PC-9 (cell line): ENCODE measurements at regions of chr14 and their contacts with region 1.

Region 1: GRCh38 chr14:95561001-95561412 is 26.2 kb downstream of the GLRX5 start:
- DNase-seq: peak; percentile 67 to 68
- H3K4me3 ChIP-seq: no peak overlapping the region
- H3K27ac ChIP-seq: no peak overlapping the region
- H3K4me1 ChIP-seq: no peaks in the 10 kb centered on the region
- H3K27me3 ChIP-seq: no peaks in the 10 kb centered on the region
- CTCF ChIP-seq: peak; percentile 92

Region 2: GRCh38 chr14:95774265-95775160 is 213.5 kb after region 1 on chr14:
- CTCF ChIA-PET with region 1: no interaction called
- POLR2A ChIA-PET with region 1: no interaction called
- intact Hi-C with region 1: loop called (anchors 1 kb)
- DNase-seq: peak in 1 of 2 experiments; percentile 1
- H3K4me3 ChIP-seq: no peak overlapping the region
- H3K27ac ChIP-seq: no peak overlapping the region
- H3K4me1 ChIP-seq: no peaks in the 10 kb centered on the region
- H3K27me3 ChIP-seq: peaks cover 16% of the 10 kb centered on the region; the same call in 1 of the 2 replicates
- CTCF ChIP-seq: peak; percentile 83

Region 3: DNA sequence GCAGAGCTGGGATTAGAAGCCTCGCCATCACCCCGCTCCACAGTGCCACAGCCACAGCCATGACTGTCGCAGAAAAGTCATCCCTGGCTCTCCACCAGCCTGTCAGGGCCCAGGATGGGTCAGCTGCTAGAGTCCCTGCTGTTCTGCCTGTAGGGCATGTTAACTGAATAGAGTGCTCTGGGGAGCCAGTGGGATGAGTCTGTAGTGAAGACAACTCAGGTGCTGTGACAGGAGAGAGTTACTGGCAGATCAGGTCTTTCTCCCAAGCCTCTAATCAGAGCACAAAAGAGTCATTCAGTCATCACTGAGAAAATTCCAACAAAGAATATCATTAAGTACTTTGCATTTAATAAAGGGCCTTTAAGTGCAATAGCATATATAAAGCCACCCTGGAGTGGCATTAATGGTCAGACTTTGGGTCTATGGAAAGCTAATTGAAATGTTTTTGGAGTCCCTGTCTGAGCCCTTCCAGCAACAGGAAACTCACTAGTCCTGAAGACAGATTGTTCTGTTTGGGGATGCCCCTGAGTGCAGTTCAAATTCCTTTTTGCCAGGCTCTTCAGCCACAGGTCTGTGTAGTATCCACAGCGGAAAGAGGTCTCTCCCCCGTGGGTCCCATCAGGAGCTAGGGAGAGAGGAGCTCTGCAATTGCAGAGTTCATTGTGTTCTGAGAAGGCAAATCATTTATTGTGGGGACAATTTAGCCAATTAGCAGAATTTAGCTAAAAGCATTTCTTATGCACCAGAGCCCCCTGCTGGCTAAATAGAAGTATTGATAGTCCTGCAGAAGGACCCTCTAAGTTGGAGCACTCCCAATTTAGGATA is 433.0 kb after region 1 on chr14:
- CTCF ChIA-PET with region 1: no interaction called
- POLR2A ChIA-PET with region 1: no interaction called
- intact Hi-C with region 1: loop called (anchors 1 kb)
- DNase-seq: no peak
- H3K4me3 ChIP-seq: no peak overlapping the region
- H3K27ac ChIP-seq: no peak overlapping the region
- H3K4me1 ChIP-seq: no peaks in the 10 kb centered on the region
- H3K27me3 ChIP-seq: no peaks in the 10 kb centered on the region
- CTCF ChIP-seq: peak; percentile 83